A673 (cell line): ENCODE measurements at regions of chr15 and their contacts with region 1.

Region 1: DNA sequence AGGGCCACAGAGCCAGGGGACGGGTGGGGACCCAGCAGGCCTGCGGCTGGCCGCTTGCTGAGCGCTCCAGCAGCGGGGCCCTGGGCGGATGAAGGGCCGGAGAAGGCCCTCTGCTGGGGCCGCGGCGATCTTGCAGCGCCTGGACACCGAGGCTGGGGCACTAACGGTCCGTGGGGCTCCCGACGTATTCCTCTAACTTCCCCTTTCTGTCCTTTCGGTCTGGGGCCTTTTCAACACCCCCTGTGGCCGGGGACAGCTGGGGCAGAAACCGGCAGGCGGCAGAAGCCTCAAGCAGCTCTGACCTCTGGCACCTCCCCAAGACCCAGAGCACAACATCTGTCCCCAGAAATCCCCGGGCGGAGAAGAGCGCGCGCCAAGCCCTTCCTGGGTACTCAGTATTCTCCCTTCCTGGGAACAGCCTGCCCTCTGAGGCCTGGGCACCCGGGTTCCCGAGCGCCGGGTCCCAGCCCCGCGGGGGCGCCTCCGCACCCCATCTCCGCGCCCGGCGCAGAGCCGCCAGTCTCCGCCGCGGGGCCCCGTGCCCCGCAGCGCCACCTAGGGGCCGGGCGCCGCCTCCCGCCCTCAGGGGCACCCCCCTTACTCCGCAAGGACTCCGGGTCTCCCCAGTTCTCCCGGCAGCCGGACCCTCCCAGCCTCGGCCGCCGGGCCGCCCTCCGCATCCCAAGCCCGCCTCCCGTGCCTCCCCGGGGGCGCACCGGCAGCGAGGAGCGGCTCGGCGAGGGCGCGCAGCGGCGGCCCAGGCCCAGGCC is 582 bp upstream of the SLCO3A1 start:
- DNase-seq: peak; percentile 63
- H3K4me3 ChIP-seq: peak overlapping the region; percentile 71
- H3K27ac ChIP-seq: peak overlapping the region; percentile 76
- H3K4me1 ChIP-seq: peaks cover 39% of the 10 kb centered on the region
- H3K27me3 ChIP-seq: peaks cover 10% of the 10 kb centered on the region
- CTCF ChIP-seq: peak; percentile 13

Region 2: GRCh38 chr15:91706322-91707032 is 146.4 kb before region 1 on chr15:
- CTCF ChIA-PET with region 1: interaction called, 4 read pairs
- POLR2A ChIA-PET with region 1: no interaction called
- intact Hi-C with region 1: loop called (anchors 10 kb)
- DNase-seq: peak; percentile 82
- H3K4me3 ChIP-seq: no peak overlapping the region
- H3K27ac ChIP-seq: no peak overlapping the region
- H3K4me1 ChIP-seq: no peaks in the 10 kb centered on the region
- H3K27me3 ChIP-seq: no peaks in the 10 kb centered on the region
- CTCF ChIP-seq: peak; percentile 95

Region 3: DNA sequence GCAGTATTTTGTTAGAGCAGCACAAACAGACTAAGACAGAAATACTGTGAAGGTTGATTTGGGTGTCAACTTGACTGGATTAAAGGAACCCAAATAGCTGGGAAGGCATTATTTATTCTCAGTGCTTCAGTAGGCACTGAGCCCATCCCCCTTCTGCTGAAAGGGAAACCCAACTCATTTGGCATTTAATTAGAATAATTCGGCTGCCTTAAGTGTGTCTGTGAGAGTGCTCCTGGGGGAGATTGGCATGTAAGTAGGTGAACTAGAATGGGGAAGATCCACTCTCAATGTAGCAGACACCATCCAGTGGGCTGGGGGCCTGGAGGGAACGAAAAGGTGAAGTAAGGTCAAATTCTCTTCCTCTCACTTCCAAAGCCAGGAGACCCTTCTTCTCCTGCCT is 19.9 kb before region 1 on chr15:
- CTCF ChIA-PET with region 1: no interaction called
- POLR2A ChIA-PET with region 1: no interaction called
- intact Hi-C with region 1: no loop called
- DNase-seq: no peak
- H3K4me3 ChIP-seq: no peak overlapping the region
- H3K27ac ChIP-seq: no peak overlapping the region
- H3K4me1 ChIP-seq: no peaks in the 10 kb centered on the region
- H3K27me3 ChIP-seq: no peaks in the 10 kb centered on the region
- CTCF ChIP-seq: no peak

Region 4: DNA sequence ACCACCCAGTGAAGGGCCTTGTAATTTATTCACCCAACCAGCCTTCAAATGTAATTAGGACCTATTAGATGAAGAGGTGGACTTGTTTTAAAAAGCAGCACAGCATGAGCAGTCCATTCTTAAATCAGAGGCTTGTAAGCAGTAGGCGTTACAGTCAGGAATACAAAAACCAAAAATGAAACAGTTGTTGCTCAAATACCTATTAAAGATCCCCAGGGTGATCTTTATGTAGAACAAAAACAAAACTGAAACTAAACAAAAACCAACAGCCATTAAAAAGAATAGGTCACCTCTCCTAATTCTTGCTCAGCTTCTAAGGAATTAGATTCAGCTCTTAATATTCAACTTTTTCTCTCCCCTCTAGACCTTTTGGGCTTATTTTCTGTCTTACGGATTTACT is 435.8 kb after region 1 on chr15:
- CTCF ChIA-PET with region 1: no interaction called
- POLR2A ChIA-PET with region 1: no interaction called
- intact Hi-C with region 1: no loop called
- DNase-seq: no peak
- H3K4me3 ChIP-seq: no peak overlapping the region
- H3K27ac ChIP-seq: no peak overlapping the region
- H3K4me1 ChIP-seq: no peaks in the 10 kb centered on the region
- H3K27me3 ChIP-seq: no peaks in the 10 kb centered on the region
- CTCF ChIP-seq: no peak